ENCODE measurements at regions of chr5 and their contacts with region 1.

Region 1: GRCh38 chr5:173293817-173294672 is 34.2 kb downstream of the STC2 start:
- DNase-seq: peak in 1 of 2 experiments; percentile 91
- H3K4me3 ChIP-seq: peak overlapping the region in 2 of 4 experiments; percentile 11 to 12; a peak in 3 of 8 replicates
- H3K27ac ChIP-seq: no peak overlapping the region
- H3K4me1 ChIP-seq: peaks cover 15 to 28% (median 15%) of the 10 kb centered on the region in 4 experiments
- H3K27me3 ChIP-seq: peaks cover 0 to 4% (median 2%) of the 10 kb centered on the region in 4 experiments; a peak in 6 of 7 replicates
- CTCF ChIP-seq: peak; percentile 77 to 89 (median 89)
- EP300 ChIP-seq: no peak
- POLR2A ChIP-seq: no peak
- RAD21 ChIP-seq: peak; percentile 95

Region 2: DNA sequence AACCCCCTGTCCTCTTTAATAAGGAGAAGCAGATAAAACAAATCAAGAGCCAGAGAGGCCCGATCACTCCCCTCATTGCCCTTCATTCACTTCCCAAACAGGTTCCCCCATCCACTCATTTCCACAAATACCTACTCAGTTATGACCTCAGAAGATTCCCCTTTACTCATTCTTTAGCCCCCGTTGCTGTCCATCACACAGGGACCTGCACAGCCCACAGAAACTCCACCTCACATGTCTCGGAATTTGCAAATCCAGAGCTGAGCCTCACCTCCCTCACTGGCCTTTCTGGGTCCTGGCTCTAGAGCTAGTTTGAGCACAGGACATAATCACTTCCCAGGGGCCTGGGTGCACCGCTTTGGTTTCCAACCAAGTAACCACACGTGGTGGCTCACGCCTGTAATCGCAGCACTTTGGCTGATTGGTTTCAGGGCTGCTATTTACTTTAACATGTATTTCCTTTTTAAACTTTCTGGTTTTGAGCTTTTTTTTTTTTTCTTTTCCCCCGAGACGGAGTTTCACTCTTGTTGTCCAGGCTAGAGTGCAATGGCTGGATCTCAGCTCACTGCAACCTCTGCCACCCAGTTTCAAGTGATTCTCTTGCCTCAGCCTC is 292.7 kb before region 1 on chr5:
- CTCF ChIA-PET with region 1: no interaction called
- POLR2A ChIA-PET with region 1: no interaction called
- DNase-seq: no peak
- H3K4me3 ChIP-seq: no peak overlapping the region
- H3K27ac ChIP-seq: no peak overlapping the region
- H3K4me1 ChIP-seq: 0 out of 7 replicates have a peak, but pooled peaks cover 0 to 2% (median 0%) of the 10 kb centered on the region in 4 experiments
- H3K27me3 ChIP-seq: no peaks in the 10 kb centered on the region
- CTCF ChIP-seq: no peak
- EP300 ChIP-seq: no peak
- POLR2A ChIP-seq: no peak
- RAD21 ChIP-seq: no peak

Region 3: DNA sequence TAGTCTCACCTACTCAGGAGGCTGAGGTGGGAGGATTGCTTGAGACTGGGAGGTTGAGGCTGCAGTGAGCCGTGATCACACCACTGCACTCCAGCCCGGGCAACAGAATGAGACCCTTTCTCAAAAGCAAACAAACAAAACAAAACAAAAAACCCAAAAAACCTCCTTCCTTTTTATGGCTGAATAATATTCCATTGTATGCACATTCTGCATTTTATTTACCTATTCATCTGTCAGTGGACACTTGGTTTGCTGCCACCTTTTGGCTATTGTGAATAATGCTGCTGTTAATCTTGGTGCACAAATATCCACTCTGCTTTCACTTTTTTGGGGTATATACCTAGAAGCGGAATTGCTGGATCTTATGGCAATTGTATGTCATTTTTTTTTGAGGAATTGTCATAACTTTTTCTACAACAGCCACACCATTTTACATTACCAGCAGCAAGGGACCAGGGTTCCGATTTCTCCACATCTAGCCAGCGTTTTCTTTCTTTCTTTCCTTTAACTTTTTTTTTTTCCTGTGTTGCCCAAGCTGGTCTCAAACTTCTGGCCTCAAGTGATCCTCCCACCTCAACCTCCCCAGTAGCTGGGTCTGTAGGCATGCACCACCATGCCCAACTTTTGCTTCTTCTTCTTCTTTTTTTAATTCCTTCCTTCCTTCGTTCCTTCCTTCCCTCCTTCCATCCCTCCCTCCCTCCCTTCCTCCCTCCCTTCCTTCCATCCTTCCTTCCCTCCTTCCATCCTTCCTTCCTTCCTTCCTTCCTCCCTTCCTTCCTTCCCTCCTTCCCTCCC is 89.7 kb before region 1 on chr5:
- CTCF ChIA-PET with region 1: no interaction called
- POLR2A ChIA-PET with region 1: no interaction called
- DNase-seq: no peak
- H3K4me3 ChIP-seq: no peak overlapping the region
- H3K27ac ChIP-seq: no peak overlapping the region
- H3K4me1 ChIP-seq: peaks cover 0 to 5% (median 2%) of the 10 kb centered on the region in 4 experiments; a peak in 3 of 7 replicates
- H3K27me3 ChIP-seq: peaks cover 0 to 2% (median 0%) of the 10 kb centered on the region in 4 experiments; a peak in 1 of 7 replicates
- CTCF ChIP-seq: peak in 2 of 3 experiments; percentile 36 to 56; a peak in 2 of 4 replicates
- EP300 ChIP-seq: no peak
- POLR2A ChIP-seq: no peak
- RAD21 ChIP-seq: peak; percentile 26 to 39

Region 4: DNA sequence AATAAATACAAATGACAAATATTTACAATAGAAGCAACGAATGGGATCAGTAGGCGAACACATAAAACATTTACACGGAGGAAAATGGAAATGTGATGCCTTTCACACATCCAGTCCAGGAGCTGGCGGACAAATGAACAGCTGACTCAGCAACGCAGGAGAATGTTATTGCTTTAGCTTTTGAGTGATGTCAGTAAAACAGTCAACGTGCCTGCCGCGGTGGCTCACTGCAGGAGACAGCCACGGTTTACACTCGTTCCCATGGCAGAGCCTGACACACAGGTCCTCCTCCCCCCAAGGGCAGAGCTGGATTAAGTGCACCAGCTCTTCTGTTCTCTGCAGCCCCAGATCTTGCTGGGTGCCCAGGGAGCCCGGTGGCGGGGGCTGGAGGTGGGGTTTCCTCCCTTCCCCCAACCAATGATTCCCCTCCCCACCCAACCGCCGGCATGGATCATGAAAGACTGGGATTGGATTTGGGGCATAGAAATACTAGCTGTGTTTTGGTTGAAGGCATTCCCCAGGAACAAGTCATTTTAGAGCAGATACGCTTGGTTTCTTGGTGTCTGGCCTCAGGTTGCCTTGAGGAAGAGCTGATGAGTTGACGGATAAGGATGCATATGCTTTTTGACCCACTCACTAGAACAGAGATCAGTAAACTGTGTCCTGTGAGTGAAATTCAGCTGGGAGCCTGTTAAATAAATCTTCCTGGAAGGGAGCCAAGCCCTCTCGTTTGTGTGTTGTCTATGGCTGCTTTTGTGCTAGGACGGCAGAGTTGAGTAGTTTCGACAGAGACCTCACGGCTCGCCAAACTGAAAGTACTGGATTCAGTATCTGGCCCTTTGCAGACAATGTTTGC is 21.7 kb after region 1 on chr5:
- CTCF ChIA-PET with region 1: interaction called, 126 read pairs
- POLR2A ChIA-PET with region 1: interaction called, 536 read pairs
- DNase-seq: no peak
- H3K4me3 ChIP-seq: no peak overlapping the region
- H3K27ac ChIP-seq: peak overlapping the region; percentile 43; the same call in 1 of the 2 replicates
- H3K4me1 ChIP-seq: peaks cover 0 to 9% (median 2%) of the 10 kb centered on the region in 4 experiments; a peak in 6 of 7 replicates
- H3K27me3 ChIP-seq: no peaks in the 10 kb centered on the region
- CTCF ChIP-seq: no peak
- EP300 ChIP-seq: no peak
- POLR2A ChIP-seq: peak; percentile 58 to 65
- RAD21 ChIP-seq: no peak

Region 5: DNA sequence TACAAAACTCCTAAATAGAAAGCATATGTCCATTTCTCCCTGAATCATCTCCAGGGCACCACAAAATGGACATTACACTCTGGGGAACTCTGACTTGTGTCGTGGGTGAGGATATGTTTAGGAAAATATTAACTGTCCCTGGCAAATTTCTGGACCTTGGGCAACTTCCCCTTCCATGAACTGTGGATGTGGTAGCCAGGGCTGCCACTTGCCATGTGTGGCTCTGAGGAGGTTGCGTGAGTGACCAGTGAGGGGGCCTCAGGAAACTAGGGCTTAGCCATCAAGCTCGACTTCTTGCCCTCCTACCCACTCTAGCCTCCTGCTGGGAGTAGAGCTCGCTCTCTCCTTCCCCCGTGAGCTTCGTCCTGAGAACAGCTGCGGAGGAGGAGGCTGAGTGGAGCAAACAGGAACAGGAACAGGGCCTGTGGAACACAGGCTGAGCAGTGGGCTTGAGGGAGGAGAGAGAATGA is 48.0 kb after region 1 on chr5:
- CTCF ChIA-PET with region 1: interaction called, 10 read pairs
- POLR2A ChIA-PET with region 1: interaction called, 4 read pairs
- DNase-seq: no peak
- H3K4me3 ChIP-seq: no peak overlapping the region
- H3K27ac ChIP-seq: no peak overlapping the region
- H3K4me1 ChIP-seq: peaks cover 0 to 8% (median 4%) of the 10 kb centered on the region in 4 experiments; a peak in 5 of 7 replicates
- H3K27me3 ChIP-seq: no peaks in the 10 kb centered on the region
- CTCF ChIP-seq: no peak
- EP300 ChIP-seq: no peak
- POLR2A ChIP-seq: no peak
- RAD21 ChIP-seq: no peak